ENCODE measurements at regions of chr3 and their contacts with region 1.

Region 1: GRCh38 chr3:157088601-157089454 is 71.1 kb downstream of the CCNL1 start:
- H3K4me3 Mint-ChIP-seq: peak overlapping the region; percentile 81
- H3K27ac Mint-ChIP-seq: peak overlapping the region; percentile 96
- H3K4me1 Mint-ChIP-seq: peaks cover 30% of the 10 kb centered on the region
- H3K27me3 Mint-ChIP-seq: peaks cover 5% of the 10 kb centered on the region

Region 2: DNA sequence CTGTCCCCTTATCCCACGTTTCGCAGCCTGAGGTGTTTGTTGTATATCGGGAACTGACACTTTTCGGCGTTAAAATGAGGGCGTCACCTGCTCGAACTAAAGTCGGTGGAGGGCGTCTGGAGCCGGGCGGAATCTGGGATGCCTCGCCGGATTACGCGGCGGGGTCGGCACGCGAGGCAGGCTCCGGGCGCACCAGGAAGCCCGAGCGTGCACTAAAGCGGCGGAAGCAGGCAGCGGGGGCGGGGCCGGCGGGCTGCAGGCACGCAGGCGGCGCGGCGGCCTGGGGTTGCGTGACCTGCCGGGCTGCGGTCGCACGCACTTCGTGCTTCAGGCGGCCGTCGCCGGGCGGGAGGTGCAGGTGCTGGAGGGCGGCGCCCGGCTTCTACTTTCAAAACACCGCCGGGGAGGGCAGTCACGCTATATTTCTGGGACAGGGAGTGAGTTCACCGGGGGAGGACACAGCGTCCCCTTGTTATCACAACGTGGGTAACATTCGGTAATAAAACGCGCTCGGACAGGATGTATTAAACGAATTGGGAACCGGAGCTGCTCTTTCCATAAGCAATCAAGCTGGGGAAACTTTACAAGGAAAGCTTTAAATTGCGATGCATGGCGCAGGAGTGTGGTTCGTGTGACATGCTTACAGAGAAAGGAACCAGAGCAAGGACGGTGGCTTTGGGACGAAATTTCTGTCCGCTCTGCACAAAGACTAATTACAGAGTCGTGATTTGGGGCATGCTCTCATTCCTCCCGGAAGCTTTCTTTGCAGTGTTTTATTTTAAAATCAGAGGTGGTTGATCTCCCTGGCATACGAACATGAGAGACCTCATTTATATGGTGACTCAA is 271.8 kb before region 1 on chr3:
- intact Hi-C with region 1: loop called (anchors 2 kb)
- H3K4me3 Mint-ChIP-seq: peak overlapping the region; percentile 75
- H3K27ac Mint-ChIP-seq: peak overlapping the region; percentile 80
- H3K4me1 Mint-ChIP-seq: peaks cover 40% of the 10 kb centered on the region
- H3K27me3 Mint-ChIP-seq: peaks cover 2% of the 10 kb centered on the region

Measured in dendritic cell treated with granulocyte-macrophage colony-stimulating factor and Interleukin-4, amounts not matched to agents 40 ng/mL and 50 ng/mL, for 4 days (primary cell).